Heart left ventricle (tissue), 16 donors: ENCODE measurements at regions of chr15 and their contacts with region 1.

Region 1: GRCh38 chr15:47917881-47918280 is 200.6 kb downstream of the SEMA6D start:
- DNase-seq: no peak
- ATAC-seq: no peak
- H3K4me3 ChIP-seq: no peak overlapping the region
- H3K27ac ChIP-seq: no peak overlapping the region
- H3K4me1 ChIP-seq: no peaks in the 10 kb centered on the region
- H3K27me3 ChIP-seq: no peaks in the 10 kb centered on the region
- CTCF ChIP-seq: no peak
- POLR2A ChIP-seq: no peak

Region 2: GRCh38 chr15:47862402-47862801 is 55.5 kb before region 1 on chr15:
- intact Hi-C with region 1: no loop called
- DNase-seq: no peak
- ATAC-seq: no peak
- H3K4me3 ChIP-seq: no peak overlapping the region
- H3K27ac ChIP-seq: no peak overlapping the region
- H3K4me1 ChIP-seq: no peaks in the 10 kb centered on the region
- H3K27me3 ChIP-seq: no peaks in the 10 kb centered on the region
- CTCF ChIP-seq: no peak
- POLR2A ChIP-seq: no peak

Region 3: GRCh38 chr15:47951781-47952180 is 33.9 kb after region 1 on chr15:
- intact Hi-C with region 1: loop called in 1 of 10 experiments (anchors 2 kb)
- DNase-seq: no peak
- ATAC-seq: no peak
- H3K4me3 ChIP-seq: no peak overlapping the region
- H3K27ac ChIP-seq: no peak overlapping the region
- H3K4me1 ChIP-seq: no peaks in the 10 kb centered on the region
- H3K27me3 ChIP-seq: no peaks in the 10 kb centered on the region
- CTCF ChIP-seq: no peak
- POLR2A ChIP-seq: no peak

Region 4: DNA sequence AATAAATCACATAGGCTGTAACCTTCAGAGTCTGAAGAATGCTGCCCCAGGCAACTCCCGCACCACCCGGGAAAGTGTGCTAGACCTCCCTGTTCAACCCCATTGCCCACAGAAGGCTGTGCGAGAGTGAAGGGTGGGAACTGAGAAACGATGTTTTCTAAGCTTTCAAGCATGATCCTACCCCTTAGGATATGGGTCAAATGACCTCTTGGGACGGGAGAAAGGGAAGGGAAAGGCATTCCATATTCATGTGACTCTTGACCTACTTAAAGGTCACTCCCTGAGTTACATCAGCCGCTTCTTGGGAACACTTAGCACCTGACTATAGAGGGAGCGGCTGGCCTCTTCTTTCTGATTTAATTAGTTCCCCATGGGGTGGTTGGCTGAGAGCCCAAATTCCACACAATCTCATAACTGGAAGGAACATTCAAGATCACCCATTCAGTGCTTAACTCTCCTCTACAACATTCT is 88.2 kb after region 1 on chr15:
- intact Hi-C with region 1: no loop called
- DNase-seq: peak in 1 of 5 donors; percentile 23
- ATAC-seq: peak in 1 of 4 donors; percentile 81
- H3K4me3 ChIP-seq: no peak overlapping the region
- H3K27ac ChIP-seq: no peak overlapping the region
- H3K4me1 ChIP-seq: peaks cover 0 to 7% (median 0%) of the 10 kb centered on the region in 12 donors
- H3K27me3 ChIP-seq: no peaks in the 10 kb centered on the region
- CTCF ChIP-seq: no peak
- POLR2A ChIP-seq: no peak